HepG2 (cell line): ENCODE measurements at regions of chr1 and their contacts with region 1.

Region 1: GRCh38 chr1:245652660-245653427 is 498.1 kb downstream of the KIF26B start:
- DNase-seq: no peak
- ATAC-seq: no peak
- H3K4me3 ChIP-seq: no peak overlapping the region
- H3K27ac ChIP-seq: no peak overlapping the region
- H3K4me1 ChIP-seq: peaks cover 11% of the 10 kb centered on the region; the same call in 1 of the 2 replicates
- H3K27me3 ChIP-seq: peaks cover 0 to 4% of the 10 kb centered on the region in 2 experiments; a peak in 1 of 5 replicates
- CTCF ChIP-seq: no peak
- EP300 ChIP-seq: no peak
- POLR2A ChIP-seq: no peak
- RAD21 ChIP-seq: no peak

Region 2: GRCh38 chr1:245641384-245641783 is 11.5 kb before region 1 on chr1:
- CTCF ChIA-PET with region 1: no interaction called
- POLR2A ChIA-PET with region 1: no interaction called
- in situ Hi-C with region 1: no loop called
- intact Hi-C with region 1: no loop called
- DNase-seq: no peak
- ATAC-seq: no peak
- H3K4me3 ChIP-seq: no peak overlapping the region
- H3K27ac ChIP-seq: no peak overlapping the region
- H3K4me1 ChIP-seq: no peaks in the 10 kb centered on the region
- H3K27me3 ChIP-seq: no peaks in the 10 kb centered on the region
- CTCF ChIP-seq: no peak
- EP300 ChIP-seq: no peak
- POLR2A ChIP-seq: no peak
- RAD21 ChIP-seq: no peak

Region 3: GRCh38 chr1:245807306-245807705 is 154.5 kb after region 1 on chr1:
- CTCF ChIA-PET with region 1: no interaction called
- POLR2A ChIA-PET with region 1: no interaction called
- in situ Hi-C with region 1: no loop called
- intact Hi-C with region 1: no loop called
- DNase-seq: no peak
- ATAC-seq: no peak
- H3K4me3 ChIP-seq: no peak overlapping the region
- H3K27ac ChIP-seq: peak overlapping the region; percentile 12
- H3K4me1 ChIP-seq: peaks cover 62% of the 10 kb centered on the region
- H3K27me3 ChIP-seq: no peaks in the 10 kb centered on the region
- CTCF ChIP-seq: no peak
- EP300 ChIP-seq: no peak
- POLR2A ChIP-seq: no peak
- RAD21 ChIP-seq: no peak

Region 4: GRCh38 chr1:245969283-245969682 is 316.4 kb after region 1 on chr1:
- CTCF ChIA-PET with region 1: no interaction called
- POLR2A ChIA-PET with region 1: no interaction called
- in situ Hi-C with region 1: no loop called
- intact Hi-C with region 1: no loop called
- DNase-seq: peak; percentile 18
- ATAC-seq: no peak
- H3K4me3 ChIP-seq: no peak overlapping the region
- H3K27ac ChIP-seq: no peak overlapping the region
- H3K4me1 ChIP-seq: peaks cover 8% of the 10 kb centered on the region
- H3K27me3 ChIP-seq: no peaks in the 10 kb centered on the region
- CTCF ChIP-seq: no peak
- EP300 ChIP-seq: no peak
- POLR2A ChIP-seq: no peak
- RAD21 ChIP-seq: no peak

Region 5: GRCh38 chr1:247500865-247501264 is 1848.0 kb after region 1 on chr1:
- CTCF ChIA-PET with region 1: no interaction called
- POLR2A ChIA-PET with region 1: no interaction called
- in situ Hi-C with region 1: no loop called
- intact Hi-C with region 1: loop called (anchors 5 kb)
- DNase-seq: no peak
- ATAC-seq: no peak
- H3K4me3 ChIP-seq: no peak overlapping the region
- H3K27ac ChIP-seq: no peak overlapping the region
- H3K4me1 ChIP-seq: no peaks in the 10 kb centered on the region
- H3K27me3 ChIP-seq: 0 out of 5 replicates have a peak, but pooled peaks cover 0 to 3% of the 10 kb centered on the region in 2 experiments
- CTCF ChIP-seq: no peak
- EP300 ChIP-seq: no peak
- POLR2A ChIP-seq: no peak
- RAD21 ChIP-seq: no peak